Left lung (tissue), 14 donors: ENCODE measurements at regions of chr5 and their contacts with region 1.

Region 1: GRCh38 chr5:78899922-78900362 is 85.2 kb downstream of the ARSB start:
- DNase-seq: no peak
- ATAC-seq: peak; percentile 71
- H3K4me3 ChIP-seq: no peak overlapping the region
- H3K27ac ChIP-seq: no peak overlapping the region
- H3K4me1 ChIP-seq: peaks cover 0 to 7% of the 10 kb centered on the region in 2 donors
- H3K27me3 ChIP-seq: no peaks in the 10 kb centered on the region
- CTCF ChIP-seq: peak; percentile 48 to 58

Region 2: GRCh38 chr5:78953092-78953800 is 53.3 kb after region 1 on chr5:
- intact Hi-C with region 1: loop called in 1 of 2 experiments (anchors 10 kb)
- DNase-seq: no peak
- ATAC-seq: no peak
- H3K4me3 ChIP-seq: no peak overlapping the region
- H3K27ac ChIP-seq: no peak overlapping the region
- H3K4me1 ChIP-seq: no peaks in the 10 kb centered on the region
- H3K27me3 ChIP-seq: no peaks in the 10 kb centered on the region
- CTCF ChIP-seq: no peak

Region 3: DNA sequence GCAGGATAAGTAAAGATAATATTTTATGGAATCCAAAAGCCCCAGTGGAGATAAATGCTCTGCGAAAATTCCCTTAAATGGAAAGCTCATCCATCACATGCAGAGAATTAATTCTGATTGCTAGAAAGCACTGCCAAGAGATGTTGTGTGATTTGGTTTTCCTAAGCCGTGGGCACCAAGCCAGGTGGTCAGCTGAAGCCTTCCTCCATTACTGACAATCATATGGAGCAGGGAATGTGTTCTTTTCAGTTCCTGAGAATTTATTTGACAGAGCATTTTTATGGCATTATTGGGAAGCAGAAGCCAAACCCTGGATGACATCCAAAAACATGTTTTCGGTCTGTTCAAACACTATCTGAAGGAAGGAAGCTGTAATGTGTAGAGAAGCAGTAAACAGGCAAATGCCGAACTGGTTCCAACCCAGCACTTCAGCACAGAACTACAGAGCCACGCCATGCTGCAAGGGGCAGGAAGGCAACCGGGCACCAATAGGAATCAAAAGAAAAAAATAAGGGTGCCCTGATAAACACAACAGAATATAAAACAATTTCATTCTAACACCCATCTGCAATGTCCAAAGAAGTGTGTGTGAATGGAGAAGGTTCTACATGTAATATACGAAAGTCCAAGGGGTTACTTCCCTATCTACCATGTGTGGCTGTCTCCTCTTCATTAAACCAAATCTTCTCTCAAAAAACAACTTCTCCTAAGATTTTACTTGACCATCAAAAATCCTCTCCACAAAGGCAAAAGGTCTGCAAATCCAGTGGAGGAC is 72.9 kb after region 1 on chr5:
- intact Hi-C with region 1: no loop called
- DNase-seq: peak in 2 of 4 donors; percentile 66 to 76
- ATAC-seq: peak; percentile 55
- H3K4me3 ChIP-seq: no peak overlapping the region
- H3K27ac ChIP-seq: no peak overlapping the region
- H3K4me1 ChIP-seq: peaks cover 7 to 13% of the 10 kb centered on the region in 2 donors
- H3K27me3 ChIP-seq: no peaks in the 10 kb centered on the region
- CTCF ChIP-seq: no peak